Activated B cell treated with CpG ODN at 0.5 μM for 24 hours (primary cell): ENCODE measurements at regions of chr11 and their contacts with region 1.

Region 1: DNA sequence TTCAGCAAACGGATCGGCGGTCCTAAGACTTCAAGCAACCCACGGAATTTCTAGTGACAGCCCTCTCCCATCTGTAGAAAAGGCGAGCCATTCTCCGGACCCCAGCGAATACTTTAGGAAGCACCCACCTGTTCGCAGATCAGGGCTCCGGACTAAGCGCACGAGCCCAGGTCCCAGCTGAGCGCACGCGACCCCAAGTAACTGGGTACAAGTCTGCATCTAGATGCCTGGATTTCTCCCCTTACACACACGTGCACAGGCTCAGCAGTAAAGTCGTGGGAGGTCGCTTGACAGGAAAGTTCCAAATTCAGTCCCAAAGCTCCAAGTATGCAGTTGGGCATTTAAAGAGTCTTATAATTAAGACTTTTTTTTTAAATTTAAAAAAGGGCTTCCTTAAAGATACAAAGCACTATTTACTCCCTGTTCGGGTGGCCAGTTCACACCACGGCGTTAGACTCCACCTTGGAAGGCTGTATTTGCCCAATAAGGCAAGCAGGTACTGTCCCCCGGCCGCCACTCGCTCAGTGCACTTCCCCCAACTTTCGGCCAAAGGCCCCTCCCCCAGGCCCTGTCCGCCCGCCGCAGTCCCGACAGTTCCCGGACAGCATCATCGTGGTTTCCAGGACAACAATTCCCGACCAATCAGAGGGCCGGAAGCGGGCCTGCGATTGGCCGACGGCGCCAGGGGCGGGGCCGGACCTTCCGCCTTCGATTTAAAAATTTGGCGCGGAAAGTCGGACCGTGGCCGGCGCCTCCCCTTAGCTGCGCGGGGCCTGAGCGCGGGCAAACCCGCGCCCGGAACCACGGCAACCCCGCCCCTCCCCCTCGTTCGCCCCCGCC is at the start of gene E2F8:
- DNase-seq: peak; percentile 79
- ATAC-seq: peak; percentile 90
- H3K4me3 Mint-ChIP-seq: peak within 1 kb of the TSS; percentile 89
- H3K27ac Mint-ChIP-seq: peak within 1 kb of the TSS; percentile 46
- H3K4me1 Mint-ChIP-seq: peaks cover 18% of the 10 kb centered on the region
- H3K27me3 Mint-ChIP-seq: peaks cover 20% of the 10 kb centered on the region
- CTCF ChIP-seq: no peak
- total RNA-seq, gene E2F8: 0.82 and 0.88 TPM in 2 replicates

Region 2: GRCh38 chr11:19076744-19077589 is 163.7 kb before region 1 on chr11:
- CTCF ChIA-PET with region 1: no interaction called
- POLR2A ChIA-PET with region 1: no interaction called
- intact Hi-C with region 1: loop called (anchors 5 kb)
- DNase-seq: peak; percentile 31
- ATAC-seq: peak; percentile 81
- H3K4me3 Mint-ChIP-seq: no peak overlapping the region
- H3K27ac Mint-ChIP-seq: no peak overlapping the region
- H3K4me1 Mint-ChIP-seq: no peaks in the 10 kb centered on the region
- H3K27me3 Mint-ChIP-seq: peaks cover 11% of the 10 kb centered on the region
- CTCF ChIP-seq: peak; percentile 98

Region 3: DNA sequence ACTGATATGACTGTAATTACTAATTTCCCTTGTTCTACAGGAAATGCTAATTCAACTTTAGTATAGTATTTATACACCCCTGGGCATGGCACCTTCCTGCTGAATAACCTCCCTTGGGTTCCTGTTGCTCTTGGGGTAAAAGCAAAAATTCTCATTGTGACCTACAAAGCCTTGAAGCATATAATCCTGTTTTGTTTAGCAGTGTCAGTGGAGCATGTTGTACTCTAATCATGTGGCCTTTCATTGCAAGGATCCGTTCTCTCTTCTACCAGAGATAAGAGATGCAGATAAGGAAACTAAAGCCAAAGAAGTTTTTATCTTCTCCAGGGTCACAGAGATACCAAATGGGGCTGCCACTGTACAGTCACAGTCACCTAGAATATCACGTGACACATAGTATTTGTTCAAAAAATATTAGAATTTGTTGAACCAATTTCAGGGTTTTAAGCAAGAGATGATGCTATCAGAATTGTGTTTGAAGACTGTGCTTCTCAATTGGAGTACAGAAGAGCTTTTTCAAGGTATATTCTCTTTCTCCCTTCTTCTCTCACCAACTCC is 63.9 kb before region 1 on chr11:
- CTCF ChIA-PET with region 1: no interaction called
- POLR2A ChIA-PET with region 1: no interaction called
- intact Hi-C with region 1: loop called (anchors 2 kb)
- DNase-seq: no peak
- ATAC-seq: peak; percentile 40
- H3K4me3 Mint-ChIP-seq: no peak overlapping the region
- H3K27ac Mint-ChIP-seq: peak overlapping the region; percentile 20
- H3K4me1 Mint-ChIP-seq: peaks cover 26% of the 10 kb centered on the region
- H3K27me3 Mint-ChIP-seq: no peaks in the 10 kb centered on the region
- CTCF ChIP-seq: no peak

Region 4: GRCh38 chr11:20363500-20364411 is 1123.1 kb after region 1 on chr11 and contains the start of gene HTATIP2:
- CTCF ChIA-PET with region 1: no interaction called
- POLR2A ChIA-PET with region 1: no interaction called
- intact Hi-C with region 1: loop called (anchors 5 kb)
- DNase-seq: peak; percentile 78
- ATAC-seq: peak; percentile 87
- H3K4me3 Mint-ChIP-seq: peak within 1 kb of the TSS; percentile 88
- H3K27ac Mint-ChIP-seq: peak within 1 kb of the TSS; percentile 89
- H3K4me1 Mint-ChIP-seq: peaks cover 57% of the 10 kb centered on the region
- H3K27me3 Mint-ChIP-seq: no peaks in the 10 kb centered on the region
- CTCF ChIP-seq: no peak
- total RNA-seq, gene HTATIP2: 35.7 and 36.5 TPM in 2 replicates